Activated CD8-positive, alpha-beta T cell treated with anti-CD3 and anti-CD28 coated beads for 36 hours (primary cell): ENCODE measurements at regions of chr3 and their contacts with region 1.

Region 1: DNA sequence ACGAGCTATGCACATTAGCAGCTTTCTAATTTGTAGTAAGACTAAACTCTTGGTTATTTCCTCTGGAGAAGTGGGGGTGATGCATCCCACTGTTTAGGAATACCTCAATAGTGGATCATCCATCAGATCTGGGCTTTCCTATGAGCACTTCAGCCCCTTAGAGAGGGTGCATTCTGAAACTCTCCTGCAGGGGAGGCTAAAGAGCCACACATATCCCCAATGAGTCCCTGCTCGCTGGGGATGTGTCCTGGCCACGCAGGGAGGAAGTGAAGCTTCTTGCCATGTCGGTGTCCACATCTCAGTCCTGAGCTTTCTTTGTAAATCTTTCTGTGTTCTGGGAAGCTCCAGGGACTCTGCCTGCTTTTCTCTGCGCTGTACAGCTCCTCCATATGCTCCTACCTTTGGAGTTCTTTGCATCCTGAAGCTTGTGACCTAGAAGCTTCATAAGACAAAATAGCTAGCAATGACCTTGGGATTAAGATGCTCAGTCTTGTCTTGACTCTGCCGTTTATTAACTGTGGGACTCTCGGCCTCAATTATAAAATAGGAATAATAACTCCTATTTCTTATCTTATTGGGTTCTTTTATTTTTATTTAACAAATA is 28.3 kb upstream of the MASP1 start:
- DNase-seq: peak; percentile 83
- ATAC-seq: peak; percentile 94
- H3K4me3 Mint-ChIP-seq: no peak overlapping the region
- H3K27ac Mint-ChIP-seq: no peak overlapping the region
- H3K4me1 Mint-ChIP-seq: peaks cover 6% of the 10 kb centered on the region
- H3K27me3 Mint-ChIP-seq: peaks cover 30% of the 10 kb centered on the region
- CTCF ChIP-seq: peak; percentile 81

Region 2: GRCh38 chr3:186540221-186540834 is 779.5 kb before region 1 on chr3:
- CTCF ChIA-PET with region 1: no interaction called
- POLR2A ChIA-PET with region 1: no interaction called
- intact Hi-C with region 1: no loop called
- DNase-seq: peak; percentile 90
- ATAC-seq: peak; percentile 85
- H3K4me3 Mint-ChIP-seq: no peak overlapping the region
- H3K27ac Mint-ChIP-seq: no peak overlapping the region
- H3K4me1 Mint-ChIP-seq: peaks cover 58% of the 10 kb centered on the region
- H3K27me3 Mint-ChIP-seq: no peaks in the 10 kb centered on the region
- CTCF ChIP-seq: peak; percentile 79

Region 3: DNA sequence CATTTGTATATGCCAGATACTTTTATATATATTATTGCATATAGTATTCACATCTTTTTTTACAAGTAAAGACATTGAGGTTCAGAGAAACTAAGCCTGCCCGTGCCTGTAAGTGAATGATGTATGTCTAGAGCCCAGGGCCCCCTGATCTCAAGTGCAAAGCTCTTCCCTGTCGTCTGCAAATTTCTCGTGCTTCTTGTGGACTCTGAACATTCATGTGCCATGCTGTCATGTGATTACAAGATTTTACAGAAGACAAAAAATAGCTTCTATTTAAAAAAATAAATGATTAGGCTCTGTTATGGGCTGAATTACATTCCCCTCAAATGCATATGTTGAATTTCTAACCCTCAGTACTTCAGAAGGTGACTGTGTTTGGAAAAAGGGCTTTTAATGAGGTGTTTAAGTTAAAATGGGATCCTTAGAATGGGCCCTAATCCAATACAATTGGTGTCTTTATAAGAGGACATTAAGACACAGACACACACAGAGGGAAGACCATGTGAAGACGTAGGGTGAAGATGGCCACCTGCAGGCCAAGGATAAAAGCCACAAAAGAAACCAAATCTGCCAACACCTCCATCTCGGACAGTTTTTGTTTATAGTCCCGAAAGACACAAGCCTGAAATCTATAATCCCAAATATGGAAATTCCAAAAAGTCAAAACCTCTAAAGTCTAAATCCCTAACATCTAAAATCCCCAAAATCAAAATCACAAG is 24.3 kb before region 1 on chr3:
- CTCF ChIA-PET with region 1: interaction called, 10 read pairs
- POLR2A ChIA-PET with region 1: no interaction called
- intact Hi-C with region 1: no loop called
- DNase-seq: no peak
- ATAC-seq: no peak
- H3K4me3 Mint-ChIP-seq: no peak overlapping the region
- H3K27ac Mint-ChIP-seq: no peak overlapping the region
- H3K4me1 Mint-ChIP-seq: no peaks in the 10 kb centered on the region
- H3K27me3 Mint-ChIP-seq: peaks cover 18% of the 10 kb centered on the region
- CTCF ChIP-seq: no peak

Region 4: DNA sequence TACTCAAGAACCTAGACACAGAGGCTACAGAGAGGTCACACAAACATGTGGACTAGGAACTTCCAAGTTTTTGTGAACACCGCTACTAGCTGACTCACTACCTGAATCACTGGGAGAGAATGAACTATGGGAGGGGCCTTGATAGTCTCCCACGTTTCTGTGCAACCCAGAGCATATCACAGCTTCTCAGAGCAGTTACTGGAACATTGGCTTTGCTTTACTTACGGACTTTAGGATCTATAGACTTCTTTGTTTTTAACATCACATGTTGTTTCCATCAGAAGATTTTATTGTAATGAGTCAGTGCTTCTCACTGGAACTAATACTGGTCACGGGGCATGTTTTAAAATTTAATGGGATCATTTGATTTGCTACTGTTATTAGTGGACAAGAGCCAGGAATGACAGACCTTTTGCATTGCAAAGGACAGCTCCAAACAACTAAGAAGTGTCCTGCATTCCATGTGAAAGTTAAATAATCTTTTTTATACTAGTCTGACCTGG is 84.0 kb after region 1 on chr3:
- CTCF ChIA-PET with region 1: interaction called, 10 read pairs
- POLR2A ChIA-PET with region 1: no interaction called
- intact Hi-C with region 1: no loop called
- DNase-seq: no peak
- ATAC-seq: no peak
- H3K4me3 Mint-ChIP-seq: no peak overlapping the region
- H3K27ac Mint-ChIP-seq: no peak overlapping the region
- H3K4me1 Mint-ChIP-seq: no peaks in the 10 kb centered on the region
- H3K27me3 Mint-ChIP-seq: peaks cover 22% of the 10 kb centered on the region
- CTCF ChIP-seq: no peak

Region 5: GRCh38 chr3:187610981-187611511 is 291.2 kb after region 1 on chr3:
- CTCF ChIA-PET with region 1: interaction called, 62 read pairs
- POLR2A ChIA-PET with region 1: no interaction called
- intact Hi-C with region 1: loop called (anchors 2 kb)
- DNase-seq: no peak
- ATAC-seq: no peak
- H3K4me3 Mint-ChIP-seq: no peak overlapping the region
- H3K27ac Mint-ChIP-seq: no peak overlapping the region
- H3K4me1 Mint-ChIP-seq: peaks cover 1% of the 10 kb centered on the region
- H3K27me3 Mint-ChIP-seq: peaks cover 34% of the 10 kb centered on the region
- CTCF ChIP-seq: no peak

Region 6: DNA sequence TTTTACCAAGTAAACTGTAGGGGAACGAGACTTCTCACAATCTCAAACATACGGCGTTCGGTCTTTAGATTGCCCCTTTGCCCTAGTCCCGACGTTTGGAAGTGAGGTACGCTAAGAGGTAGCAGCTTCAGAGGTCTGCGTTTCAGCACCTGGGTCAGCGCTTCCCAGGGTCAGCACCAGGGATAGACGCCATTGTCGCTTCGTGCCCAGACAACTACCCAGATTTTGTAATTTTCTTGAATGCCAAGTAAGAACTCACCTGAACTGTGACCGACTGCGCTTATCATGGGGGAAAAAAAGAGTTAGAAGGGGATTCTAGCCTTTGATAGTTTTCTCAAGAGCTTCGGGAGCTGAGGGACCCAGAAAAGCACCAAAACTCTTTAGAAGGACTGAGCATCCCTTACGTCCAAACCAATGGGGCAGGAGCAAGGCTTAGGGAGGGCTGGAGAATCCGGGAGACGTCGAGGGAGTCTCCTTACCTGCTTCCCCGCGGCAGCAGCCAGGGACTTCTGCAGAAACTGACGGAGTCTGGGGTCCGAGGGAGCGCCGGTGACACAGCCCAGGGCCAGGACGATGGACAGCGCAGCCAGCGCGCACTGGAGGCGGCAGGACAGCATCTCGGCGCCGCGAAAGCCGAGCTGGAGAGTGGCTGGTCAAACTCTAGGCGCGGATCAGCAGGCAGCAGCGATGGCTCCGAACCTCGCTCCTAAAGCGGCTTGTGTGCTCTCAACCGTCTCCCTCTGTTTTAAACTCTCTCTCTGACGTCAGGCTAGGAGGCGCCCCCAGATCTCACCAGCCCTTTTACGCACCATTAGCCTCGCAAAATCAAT is 350.1 kb after region 1 on chr3 and contains the start of gene SST:
- CTCF ChIA-PET with region 1: interaction called, 372 read pairs
- POLR2A ChIA-PET with region 1: no interaction called
- intact Hi-C with region 1: no loop called
- DNase-seq: peak; percentile 52
- ATAC-seq: no peak
- H3K4me3 Mint-ChIP-seq: no peak within 1 kb of the TSS
- H3K27ac Mint-ChIP-seq: no peak within 1 kb of the TSS
- H3K4me1 Mint-ChIP-seq: peaks cover 7% of the 10 kb centered on the region
- H3K27me3 Mint-ChIP-seq: peaks cover 44% of the 10 kb centered on the region
- CTCF ChIP-seq: no peak
- total RNA-seq, gene SST: not detected

Region 7: DNA sequence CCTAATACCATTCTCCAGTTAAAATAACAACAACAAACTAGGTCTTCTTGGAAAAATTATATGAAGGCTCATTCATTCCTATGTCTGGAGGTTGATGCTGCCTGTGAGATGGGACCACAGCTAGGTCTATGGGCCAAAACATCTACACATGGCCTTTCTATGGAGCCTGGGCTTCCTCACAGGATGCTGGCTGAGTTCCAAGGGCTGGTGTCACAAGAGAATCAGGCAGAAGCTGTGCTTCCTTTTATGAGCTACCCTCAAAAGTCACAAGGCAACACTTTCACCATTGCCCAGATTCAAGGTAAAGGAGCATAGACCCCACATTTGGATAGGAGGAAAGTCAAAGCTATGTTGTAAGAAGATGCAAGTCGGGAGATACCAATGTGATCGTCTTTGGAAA is 387.2 kb after region 1 on chr3:
- CTCF ChIA-PET with region 1: interaction called, 118 read pairs
- POLR2A ChIA-PET with region 1: no interaction called
- intact Hi-C with region 1: no loop called
- DNase-seq: no peak
- ATAC-seq: no peak
- H3K4me3 Mint-ChIP-seq: no peak overlapping the region
- H3K27ac Mint-ChIP-seq: no peak overlapping the region
- H3K4me1 Mint-ChIP-seq: no peaks in the 10 kb centered on the region
- H3K27me3 Mint-ChIP-seq: no peaks in the 10 kb centered on the region
- CTCF ChIP-seq: no peak